B cell (primary cell): ENCODE measurements at regions of chr9 and their contacts with region 1.

Region 1: DNA sequence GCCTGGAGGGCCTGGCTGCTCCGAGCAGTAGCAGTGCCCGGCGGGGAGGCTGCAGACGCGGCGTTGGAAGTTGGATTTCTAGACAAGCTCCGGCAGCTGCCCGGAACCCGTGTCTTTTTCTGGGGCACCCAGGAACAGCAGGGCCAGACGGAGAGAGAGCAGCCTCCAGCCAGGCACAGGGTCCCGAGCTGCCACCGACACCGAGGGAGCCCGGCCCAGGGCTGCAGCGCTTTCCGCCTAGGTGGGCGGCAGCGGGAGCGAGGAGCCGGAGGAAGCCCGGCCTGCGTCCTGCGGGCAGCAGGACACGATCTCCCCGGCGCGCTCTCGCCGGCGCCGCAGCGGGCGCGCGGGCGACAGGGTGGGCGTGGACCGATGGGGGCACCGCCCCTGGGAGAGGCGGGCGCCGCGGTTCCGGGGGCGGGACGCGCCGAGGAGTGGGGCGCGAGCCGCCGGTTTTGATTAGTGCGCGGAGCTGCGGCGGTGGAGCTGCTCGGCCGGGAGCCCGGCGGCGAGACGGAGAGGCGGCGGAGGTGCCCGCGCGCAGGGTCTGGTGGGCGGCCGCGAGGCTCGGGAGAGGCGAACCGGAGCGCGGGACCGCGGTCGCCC is at the start of gene UGCG:
- DNase-seq: peak; percentile 93
- ATAC-seq: peak; percentile 85
- H3K4me3 ChIP-seq: peak within 1 kb of the TSS; percentile 70 to 95 (median 91)
- H3K4me3 Mint-ChIP-seq: peak within 1 kb of the TSS; percentile 94
- H3K27ac ChIP-seq: peak within 1 kb of the TSS; percentile 54 to 84
- H3K27ac Mint-ChIP-seq: peak within 1 kb of the TSS; percentile 91
- H3K4me1 ChIP-seq: peaks cover 42 to 51% of the 10 kb centered on the region in 2 donors
- H3K4me1 Mint-ChIP-seq: peaks cover 12% of the 10 kb centered on the region
- H3K27me3 ChIP-seq: no peaks in the 10 kb centered on the region
- H3K27me3 Mint-ChIP-seq: no peaks in the 10 kb centered on the region
- CTCF ChIP-seq: no peak
- total RNA-seq, gene UGCG: 53.5 and 54.1 TPM in 2 replicates

Region 2: DNA sequence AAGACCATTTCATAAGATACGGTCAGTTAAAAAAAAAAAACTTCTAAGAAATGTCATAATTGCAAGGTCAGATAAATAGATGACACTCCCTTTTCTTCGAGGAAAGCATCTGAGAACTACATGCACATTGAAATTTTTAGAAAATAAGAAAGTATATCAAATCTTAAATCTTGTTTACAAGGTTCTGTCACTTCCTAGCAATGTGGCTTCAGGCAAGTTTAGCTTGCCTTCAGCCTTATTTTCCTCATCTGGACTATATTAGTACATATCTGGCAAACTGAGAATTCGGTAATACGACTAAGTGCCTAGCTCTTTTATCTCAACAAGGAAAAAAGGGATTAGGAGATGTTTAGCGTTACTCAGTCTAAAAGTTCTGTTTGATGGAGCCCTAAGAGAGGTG is 533.9 kb before region 1 on chr9:
- CTCF ChIA-PET with region 1: no interaction called
- POLR2A ChIA-PET with region 1: no interaction called
- intact Hi-C with region 1: no loop called
- DNase-seq: no peak
- ATAC-seq: no peak
- H3K4me3 ChIP-seq: no peak overlapping the region
- H3K4me3 Mint-ChIP-seq: no peak overlapping the region
- H3K27ac ChIP-seq: no peak overlapping the region
- H3K27ac Mint-ChIP-seq: no peak overlapping the region
- H3K4me1 ChIP-seq: no peaks in the 10 kb centered on the region
- H3K4me1 Mint-ChIP-seq: no peaks in the 10 kb centered on the region
- H3K27me3 ChIP-seq: no peaks in the 10 kb centered on the region
- H3K27me3 Mint-ChIP-seq: no peaks in the 10 kb centered on the region
- CTCF ChIP-seq: no peak

Region 3: GRCh38 chr9:111483862-111484571 is 412.4 kb before region 1 on chr9 and contains the start of gene ECPAS:
- CTCF ChIA-PET with region 1: no interaction called
- POLR2A ChIA-PET with region 1: no interaction called
- intact Hi-C with region 1: loop called (anchors 5 kb)
- DNase-seq: peak; percentile 83
- ATAC-seq: peak; percentile 60
- H3K4me3 ChIP-seq: peak within 1 kb of the TSS; percentile 68 to 92 (median 86)
- H3K4me3 Mint-ChIP-seq: peak within 1 kb of the TSS; percentile 78
- H3K27ac ChIP-seq: peak within 1 kb of the TSS; percentile 73 to 85
- H3K27ac Mint-ChIP-seq: peak within 1 kb of the TSS; percentile 70
- H3K4me1 ChIP-seq: peaks cover 7 to 9% of the 10 kb centered on the region in 2 donors
- H3K4me1 Mint-ChIP-seq: peaks cover 27% of the 10 kb centered on the region
- H3K27me3 ChIP-seq: peaks cover 0 to 2% (median 0%) of the 10 kb centered on the region in 4 experiments
- H3K27me3 Mint-ChIP-seq: peaks cover 7% of the 10 kb centered on the region
- CTCF ChIP-seq: no peak
- total RNA-seq, gene ECPAS: 66.7 and 69.5 TPM in 2 replicates

Region 4: GRCh38 chr9:111851566-111851965 is 44.9 kb before region 1 on chr9:
- CTCF ChIA-PET with region 1: no interaction called
- POLR2A ChIA-PET with region 1: no interaction called
- intact Hi-C with region 1: no loop called
- DNase-seq: no peak
- ATAC-seq: no peak
- H3K4me3 ChIP-seq: no peak overlapping the region
- H3K4me3 Mint-ChIP-seq: no peak overlapping the region
- H3K27ac ChIP-seq: no peak overlapping the region
- H3K27ac Mint-ChIP-seq: no peak overlapping the region
- H3K4me1 ChIP-seq: no peaks in the 10 kb centered on the region
- H3K4me1 Mint-ChIP-seq: no peaks in the 10 kb centered on the region
- H3K27me3 ChIP-seq: no peaks in the 10 kb centered on the region
- H3K27me3 Mint-ChIP-seq: no peaks in the 10 kb centered on the region
- CTCF ChIP-seq: no peak

Region 5: DNA sequence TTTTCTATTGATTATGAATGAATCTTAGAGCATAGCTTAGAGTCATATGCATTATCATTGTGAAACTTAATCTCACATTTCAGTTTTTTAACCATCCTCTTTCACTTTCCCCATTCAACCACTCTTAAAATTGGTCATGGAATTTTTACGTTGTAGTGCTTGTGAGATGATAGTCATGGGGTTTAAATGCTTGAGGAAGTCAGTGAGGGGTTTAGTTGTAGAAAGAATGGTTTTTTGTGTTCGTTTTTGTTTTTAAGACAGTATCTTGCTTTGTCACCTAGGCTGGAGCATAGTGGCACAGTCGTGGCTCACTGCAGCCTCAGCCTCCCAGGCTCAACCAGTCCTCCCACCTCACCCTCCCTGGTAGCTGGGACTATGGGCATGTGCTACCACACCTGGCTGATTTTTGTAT is 19.8 kb after region 1 on chr9:
- CTCF ChIA-PET with region 1: interaction called, 4 read pairs
- POLR2A ChIA-PET with region 1: interaction called, 3 read pairs
- intact Hi-C with region 1: loop called (anchors 2 kb)
- DNase-seq: peak; percentile 35
- ATAC-seq: peak; percentile 12
- H3K4me3 ChIP-seq: no peak overlapping the region
- H3K4me3 Mint-ChIP-seq: peak overlapping the region; percentile 69
- H3K27ac ChIP-seq: peak overlapping the region; percentile 35 to 79
- H3K27ac Mint-ChIP-seq: peak overlapping the region; percentile 86
- H3K4me1 ChIP-seq: peaks cover 53 to 66% of the 10 kb centered on the region in 2 donors
- H3K4me1 Mint-ChIP-seq: peaks cover 72% of the 10 kb centered on the region
- H3K27me3 ChIP-seq: no peaks in the 10 kb centered on the region
- H3K27me3 Mint-ChIP-seq: no peaks in the 10 kb centered on the region
- CTCF ChIP-seq: no peak

Region 6: DNA sequence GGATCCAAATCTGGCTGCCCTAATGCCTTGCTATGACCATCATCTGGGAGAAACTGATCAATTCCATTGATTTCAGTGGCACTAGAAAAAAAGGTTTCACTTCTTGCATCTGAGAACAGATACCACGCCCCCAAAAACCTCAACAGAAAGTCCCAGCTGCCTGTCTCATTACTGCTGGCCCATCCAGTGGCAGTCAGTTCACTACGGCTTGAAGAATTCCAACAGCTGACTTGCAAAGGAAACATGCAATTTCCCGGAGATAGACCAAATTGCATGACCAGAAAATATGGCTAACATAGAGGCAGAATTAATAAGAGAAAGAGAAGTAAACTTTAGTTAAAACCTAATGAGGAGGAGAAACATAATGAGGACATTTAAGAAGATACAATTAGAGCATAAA is 48.8 kb after region 1 on chr9:
- CTCF ChIA-PET with region 1: no interaction called
- POLR2A ChIA-PET with region 1: interaction called, 11 read pairs
- intact Hi-C with region 1: no loop called
- DNase-seq: peak; percentile 64
- ATAC-seq: peak; percentile 86
- H3K4me3 ChIP-seq: peak overlapping the region in 1 of 5 experiments; percentile 27
- H3K4me3 Mint-ChIP-seq: peak overlapping the region; percentile 73
- H3K27ac ChIP-seq: no peak overlapping the region
- H3K27ac Mint-ChIP-seq: peak overlapping the region; percentile 67
- H3K4me1 ChIP-seq: peaks cover 29 to 38% of the 10 kb centered on the region in 2 donors
- H3K4me1 Mint-ChIP-seq: peaks cover 40% of the 10 kb centered on the region
- H3K27me3 ChIP-seq: no peaks in the 10 kb centered on the region
- H3K27me3 Mint-ChIP-seq: no peaks in the 10 kb centered on the region
- CTCF ChIP-seq: no peak

Region 7: DNA sequence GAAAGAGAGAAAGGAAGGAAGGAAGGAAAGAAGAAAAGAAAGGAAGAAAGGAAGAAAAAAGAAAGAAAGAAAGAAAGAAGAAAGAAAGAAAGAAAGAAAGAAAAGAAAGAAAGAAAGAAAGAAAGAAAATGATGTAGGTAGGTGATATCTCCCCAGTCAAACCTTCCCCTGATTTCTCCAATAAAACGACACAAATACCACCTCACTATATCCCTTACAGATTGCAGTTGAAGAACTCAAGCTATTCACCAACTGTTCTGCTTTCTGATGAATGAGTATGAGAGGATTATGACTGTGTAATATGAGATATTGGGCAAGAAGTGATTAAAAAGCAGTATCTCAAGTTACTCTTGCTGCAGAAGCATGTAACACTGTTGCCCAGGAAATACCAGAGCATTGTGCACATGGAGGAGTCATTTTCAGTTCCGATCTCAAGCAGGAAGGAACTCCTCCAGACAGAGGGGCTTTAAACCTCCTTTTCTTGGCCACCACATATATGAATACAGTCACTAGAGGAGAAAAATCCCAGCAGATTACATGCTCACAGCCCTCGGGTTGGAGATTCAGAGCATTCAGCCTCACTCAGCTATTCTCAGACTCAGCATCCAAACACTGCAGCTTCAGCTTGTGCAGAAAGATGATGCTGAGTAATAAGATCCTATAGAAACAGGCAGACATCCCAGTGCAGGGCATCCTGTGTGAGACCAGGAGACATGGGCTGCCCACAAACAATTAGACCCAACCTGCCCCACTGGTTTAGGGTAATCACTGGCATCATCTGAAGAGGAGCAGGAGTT is 61.6 kb after region 1 on chr9:
- CTCF ChIA-PET with region 1: no interaction called
- POLR2A ChIA-PET with region 1: no interaction called
- intact Hi-C with region 1: no loop called
- DNase-seq: peak; percentile 54
- ATAC-seq: peak; percentile 41
- H3K4me3 ChIP-seq: peak overlapping the region in 1 of 5 experiments; percentile 7
- H3K4me3 Mint-ChIP-seq: peak overlapping the region; percentile 73
- H3K27ac ChIP-seq: peak overlapping the region in 1 of 2 donors; percentile 56
- H3K27ac Mint-ChIP-seq: peak overlapping the region; percentile 66
- H3K4me1 ChIP-seq: peaks cover 31 to 40% of the 10 kb centered on the region in 2 donors
- H3K4me1 Mint-ChIP-seq: peaks cover 40% of the 10 kb centered on the region
- H3K27me3 ChIP-seq: no peaks in the 10 kb centered on the region
- H3K27me3 Mint-ChIP-seq: no peaks in the 10 kb centered on the region
- CTCF ChIP-seq: peak; percentile 11

Region 8: DNA sequence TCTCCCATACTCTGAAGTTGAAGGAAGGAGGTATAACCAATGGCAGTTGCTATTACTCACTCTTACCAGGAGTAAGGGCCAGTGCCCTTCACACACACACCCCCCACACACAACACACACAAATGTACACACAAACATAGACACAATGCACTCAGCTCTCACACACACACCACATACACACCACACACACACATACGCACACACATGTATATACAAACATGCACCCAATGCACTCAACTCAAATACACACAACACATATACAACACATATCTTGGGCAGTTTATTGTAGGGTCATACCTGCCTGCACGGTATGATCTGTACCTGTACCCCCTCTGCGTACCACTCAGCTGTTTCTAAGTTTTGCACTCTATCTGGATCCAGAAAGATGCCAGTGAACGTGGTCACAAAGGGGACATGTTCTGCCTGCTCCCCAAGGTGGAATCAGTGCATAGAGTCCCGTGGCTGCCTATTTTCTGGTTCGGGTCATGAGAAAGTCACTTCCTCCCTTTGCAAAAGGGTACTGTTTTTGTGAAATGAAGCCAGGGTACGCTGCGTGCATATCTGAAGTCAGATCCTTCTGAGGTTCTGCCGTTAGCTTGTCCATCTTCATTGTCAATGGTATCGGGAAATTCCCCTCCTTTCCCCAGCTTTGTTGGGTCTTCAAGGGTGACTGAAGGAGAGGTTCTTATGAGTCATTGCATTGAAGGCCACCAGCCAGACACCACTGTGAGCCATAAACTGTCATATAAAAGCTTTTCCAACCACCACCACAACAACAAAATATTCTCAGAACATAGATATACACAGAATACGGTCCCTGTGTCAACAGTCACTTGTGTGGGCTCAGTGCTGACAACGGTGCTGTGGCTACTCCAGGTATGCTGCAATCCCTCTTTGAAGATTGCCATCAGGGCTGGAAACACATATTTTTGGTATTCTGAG is 132.1 kb after region 1 on chr9:
- CTCF ChIA-PET with region 1: no interaction called
- POLR2A ChIA-PET with region 1: no interaction called
- intact Hi-C with region 1: loop called (anchors 1 kb)
- DNase-seq: peak; percentile 56
- ATAC-seq: peak; percentile 53
- H3K4me3 ChIP-seq: no peak overlapping the region
- H3K4me3 Mint-ChIP-seq: peak overlapping the region; percentile 67
- H3K27ac ChIP-seq: peak overlapping the region in 1 of 2 donors; percentile 87
- H3K27ac Mint-ChIP-seq: peak overlapping the region; percentile 89
- H3K4me1 ChIP-seq: peaks cover 55% of the 10 kb centered on the region in 2 donors
- H3K4me1 Mint-ChIP-seq: peaks cover 55% of the 10 kb centered on the region
- H3K27me3 ChIP-seq: no peaks in the 10 kb centered on the region
- H3K27me3 Mint-ChIP-seq: no peaks in the 10 kb centered on the region
- CTCF ChIP-seq: no peak

Region 9: GRCh38 chr9:112379177-112380101 is 483.0 kb after region 1 on chr9:
- CTCF ChIA-PET with region 1: interaction called, 4 read pairs
- POLR2A ChIA-PET with region 1: no interaction called
- intact Hi-C with region 1: loop called (anchors 1 kb)
- DNase-seq: peak; percentile 96
- ATAC-seq: peak; percentile 93
- H3K4me3 ChIP-seq: peak overlapping the region; percentile 82 to 98 (median 89)
- H3K4me3 Mint-ChIP-seq: peak overlapping the region; percentile 95
- H3K27ac ChIP-seq: peak overlapping the region; percentile 78 to 88
- H3K27ac Mint-ChIP-seq: peak overlapping the region; percentile 92
- H3K4me1 ChIP-seq: peaks cover 27 to 30% of the 10 kb centered on the region in 2 donors
- H3K4me1 Mint-ChIP-seq: peaks cover 59% of the 10 kb centered on the region
- H3K27me3 ChIP-seq: no peaks in the 10 kb centered on the region
- H3K27me3 Mint-ChIP-seq: no peaks in the 10 kb centered on the region
- CTCF ChIP-seq: no peak